Naive thymus-derived CD4-positive, alpha-beta T cell (primary cell): ENCODE measurements at regions of chr5 and their contacts with region 1.

Region 1: GRCh38 chr5:150778517-150779396 is at the start of gene SMIM3:
- DNase-seq: peak; percentile 45 to 71 (median 62)
- ATAC-seq: peak; percentile 77
- H3K4me3 ChIP-seq: peak within 1 kb of the TSS; percentile 80
- H3K4me3 Mint-ChIP-seq: peak within 1 kb of the TSS; percentile 95 to 100 (median 98)
- H3K27ac ChIP-seq: peak within 1 kb of the TSS; percentile 73
- H3K27ac Mint-ChIP-seq: peak within 1 kb of the TSS; percentile 91 to 98 (median 95)
- H3K4me1 ChIP-seq: peaks cover 17 to 41% of the 10 kb centered on the region in 2 donors
- H3K4me1 Mint-ChIP-seq: peaks cover 34 to 62% (median 57%) of the 10 kb centered on the region in 7 donors
- H3K27me3 ChIP-seq: no peaks in the 10 kb centered on the region
- H3K27me3 Mint-ChIP-seq: peaks cover 0 to 5% (median 0%) of the 10 kb centered on the region in 5 donors
- total RNA-seq, gene SMIM3: 5.2 to 17.9 (median 7.9) TPM

Region 2: GRCh38 chr5:150449517-150450339 is 329.0 kb before region 1 on chr5 and contains the start of gene RPS14:
- CTCF ChIA-PET with region 1: interaction called, 3 read pairs
- POLR2A ChIA-PET with region 1: interaction called, 9 read pairs
- intact Hi-C with region 1: loop called in 1 of 2 experiments (anchors 2 kb)
- DNase-seq: peak; percentile 89 to 98 (median 97)
- ATAC-seq: peak; percentile 97
- H3K4me3 ChIP-seq: peak within 1 kb of the TSS; percentile 68
- H3K4me3 Mint-ChIP-seq: peak within 1 kb of the TSS; percentile 89 to 100 (median 96)
- H3K27ac ChIP-seq: peak within 1 kb of the TSS; percentile 100
- H3K27ac Mint-ChIP-seq: peak within 1 kb of the TSS; percentile 97 to 100 (median 100)
- H3K4me1 ChIP-seq: peaks cover 18 to 23% of the 10 kb centered on the region in 2 donors
- H3K4me1 Mint-ChIP-seq: peaks cover 21 to 44% (median 37%) of the 10 kb centered on the region in 7 donors
- H3K27me3 ChIP-seq: no peaks in the 10 kb centered on the region
- H3K27me3 Mint-ChIP-seq: no peaks in the 10 kb centered on the region
- total RNA-seq, gene RPS14: 2,331 to 7,378 (median 6,414) TPM

Region 3: GRCh38 chr5:150656191-150657132 is 122.3 kb before region 1 on chr5:
- CTCF ChIA-PET with region 1: no interaction called
- POLR2A ChIA-PET with region 1: no interaction called
- intact Hi-C with region 1: loop called (anchors 2 to 5 kb)
- DNase-seq: peak; percentile 74 to 88 (median 83)
- ATAC-seq: peak; percentile 96
- H3K4me3 ChIP-seq: peak overlapping the region; percentile 75
- H3K4me3 Mint-ChIP-seq: peak overlapping the region; percentile 75 to 90 (median 84)
- H3K27ac ChIP-seq: peak overlapping the region; percentile 63
- H3K27ac Mint-ChIP-seq: peak overlapping the region in 7 of 9 donors; percentile 17 to 74 (median 54)
- H3K4me1 ChIP-seq: peaks cover 0 to 4% of the 10 kb centered on the region in 2 donors
- H3K4me1 Mint-ChIP-seq: peaks cover 0 to 12% (median 5%) of the 10 kb centered on the region in 7 donors
- H3K27me3 ChIP-seq: no peaks in the 10 kb centered on the region
- H3K27me3 Mint-ChIP-seq: peaks cover 0 to 19% (median 0%) of the 10 kb centered on the region in 5 donors

Region 4: DNA sequence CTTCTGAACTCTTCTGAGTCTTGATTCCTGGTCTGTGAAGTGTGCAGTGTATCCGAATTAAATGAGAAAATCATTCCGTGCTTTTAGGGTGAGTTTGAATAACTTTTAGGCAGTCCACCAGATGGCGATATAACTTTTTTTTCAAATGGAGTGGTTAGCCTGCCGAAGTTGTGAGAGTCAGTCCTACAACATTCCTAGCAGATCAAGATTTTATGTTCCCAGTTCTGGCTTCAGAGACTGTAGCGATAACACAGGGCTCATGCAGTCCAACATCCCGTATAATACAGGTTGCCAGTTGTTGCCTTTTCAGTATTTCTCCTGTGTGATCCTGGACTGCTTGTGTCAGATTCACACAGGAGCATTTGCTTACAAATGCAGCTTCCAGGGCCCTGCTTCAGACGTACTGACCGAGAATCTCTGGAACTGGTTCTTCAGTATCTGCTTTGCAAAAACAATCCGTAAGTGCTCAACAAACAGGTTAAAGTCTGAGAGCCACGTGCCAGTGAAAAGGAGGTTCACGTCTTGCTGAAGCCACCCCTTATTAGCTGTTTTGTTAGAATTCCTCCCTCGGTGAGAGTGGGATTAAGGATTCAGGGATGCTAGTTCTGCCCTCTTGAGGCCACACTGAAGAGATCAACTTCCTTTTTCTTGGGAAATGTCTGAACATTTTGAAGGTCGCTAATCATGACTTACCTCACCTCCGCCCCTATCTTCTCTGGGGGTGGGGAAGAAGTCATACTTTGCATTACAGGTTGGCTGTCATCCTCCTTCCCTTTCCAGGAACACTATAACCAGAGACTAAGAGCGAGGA is 22.6 kb after region 1 on chr5:
- CTCF ChIA-PET with region 1: interaction called, 20 read pairs
- POLR2A ChIA-PET with region 1: interaction called, 8 read pairs
- intact Hi-C with region 1: loop called in 1 of 2 experiments (anchors 1 kb)
- DNase-seq: peak in 7 of 9 donors; percentile 25 to 53 (median 43)
- ATAC-seq: peak; percentile 55
- H3K4me3 ChIP-seq: no peak overlapping the region
- H3K4me3 Mint-ChIP-seq: peak overlapping the region in 1 of 10 donors; percentile 18
- H3K27ac ChIP-seq: no peak overlapping the region
- H3K27ac Mint-ChIP-seq: no peak overlapping the region
- H3K4me1 ChIP-seq: no peaks in the 10 kb centered on the region
- H3K4me1 Mint-ChIP-seq: peaks cover 0 to 18% (median 5%) of the 10 kb centered on the region in 7 donors
- H3K27me3 ChIP-seq: no peaks in the 10 kb centered on the region
- H3K27me3 Mint-ChIP-seq: peaks cover 0 to 16% (median 5%) of the 10 kb centered on the region in 5 donors

Region 5: GRCh38 chr5:151150471-151151262 is 371.9 kb after region 1 on chr5:
- CTCF ChIA-PET with region 1: no interaction called
- POLR2A ChIA-PET with region 1: no interaction called
- intact Hi-C with region 1: loop called in 1 of 2 experiments (anchors 5 kb)
- DNase-seq: peak; percentile 39 to 93 (median 83)
- ATAC-seq: peak; percentile 89
- H3K4me3 ChIP-seq: peak overlapping the region; percentile 44
- H3K4me3 Mint-ChIP-seq: peak overlapping the region; percentile 70 to 97 (median 86)
- H3K27ac ChIP-seq: peak overlapping the region; percentile 92
- H3K27ac Mint-ChIP-seq: peak overlapping the region; percentile 91 to 99 (median 97)
- H3K4me1 ChIP-seq: peaks cover 93 to 99% of the 10 kb centered on the region in 2 donors
- H3K4me1 Mint-ChIP-seq: peaks cover 80 to 100% (median 96%) of the 10 kb centered on the region in 7 donors
- H3K27me3 ChIP-seq: no peaks in the 10 kb centered on the region
- H3K27me3 Mint-ChIP-seq: no peaks in the 10 kb centered on the region